ENCODE measurements at regions of chr19 and their contacts with region 1.

Region 1: GRCh38 chr19:32570081-32570785 is 10.8 kb upstream of the PDCD5 start:
- DNase-seq: peak; percentile 75
- H3K4me3 ChIP-seq: peak overlapping the region; percentile 23 to 60
- H3K27ac ChIP-seq: no peak overlapping the region
- H3K4me1 ChIP-seq: no peaks in the 10 kb centered on the region
- H3K27me3 ChIP-seq: no peaks in the 10 kb centered on the region; the same call in 1 of the 2 replicates
- CTCF ChIP-seq: peak; percentile 91
- EP300 ChIP-seq: no peak
- RAD21 ChIP-seq: peak; percentile 93

Region 2: GRCh38 chr19:30669329-30670010 is 1900.8 kb before region 1 on chr19:
- CTCF ChIA-PET with region 1: interaction called, 12 read pairs
- POLR2A ChIA-PET with region 1: no interaction called
- DNase-seq: peak; percentile 83
- H3K4me3 ChIP-seq: no peak overlapping the region; a peak in 2 of 4 replicates
- H3K27ac ChIP-seq: no peak overlapping the region
- H3K4me1 ChIP-seq: peaks cover 0 to 5% of the 10 kb centered on the region in 2 experiments; a peak in 1 of 4 replicates
- H3K27me3 ChIP-seq: no peaks in the 10 kb centered on the region
- CTCF ChIP-seq: peak; percentile 84
- EP300 ChIP-seq: no peak
- RAD21 ChIP-seq: peak; percentile 83

Region 3: GRCh38 chr19:32233885-32234284 is 336.3 kb before region 1 on chr19:
- CTCF ChIA-PET with region 1: no interaction called
- POLR2A ChIA-PET with region 1: no interaction called
- DNase-seq: no peak
- H3K4me3 ChIP-seq: no peak overlapping the region
- H3K27ac ChIP-seq: no peak overlapping the region
- H3K4me1 ChIP-seq: peaks cover 0 to 4% of the 10 kb centered on the region in 2 experiments; a peak in 1 of 4 replicates
- H3K27me3 ChIP-seq: no peaks in the 10 kb centered on the region
- CTCF ChIP-seq: no peak
- EP300 ChIP-seq: no peak
- RAD21 ChIP-seq: no peak

Region 4: DNA sequence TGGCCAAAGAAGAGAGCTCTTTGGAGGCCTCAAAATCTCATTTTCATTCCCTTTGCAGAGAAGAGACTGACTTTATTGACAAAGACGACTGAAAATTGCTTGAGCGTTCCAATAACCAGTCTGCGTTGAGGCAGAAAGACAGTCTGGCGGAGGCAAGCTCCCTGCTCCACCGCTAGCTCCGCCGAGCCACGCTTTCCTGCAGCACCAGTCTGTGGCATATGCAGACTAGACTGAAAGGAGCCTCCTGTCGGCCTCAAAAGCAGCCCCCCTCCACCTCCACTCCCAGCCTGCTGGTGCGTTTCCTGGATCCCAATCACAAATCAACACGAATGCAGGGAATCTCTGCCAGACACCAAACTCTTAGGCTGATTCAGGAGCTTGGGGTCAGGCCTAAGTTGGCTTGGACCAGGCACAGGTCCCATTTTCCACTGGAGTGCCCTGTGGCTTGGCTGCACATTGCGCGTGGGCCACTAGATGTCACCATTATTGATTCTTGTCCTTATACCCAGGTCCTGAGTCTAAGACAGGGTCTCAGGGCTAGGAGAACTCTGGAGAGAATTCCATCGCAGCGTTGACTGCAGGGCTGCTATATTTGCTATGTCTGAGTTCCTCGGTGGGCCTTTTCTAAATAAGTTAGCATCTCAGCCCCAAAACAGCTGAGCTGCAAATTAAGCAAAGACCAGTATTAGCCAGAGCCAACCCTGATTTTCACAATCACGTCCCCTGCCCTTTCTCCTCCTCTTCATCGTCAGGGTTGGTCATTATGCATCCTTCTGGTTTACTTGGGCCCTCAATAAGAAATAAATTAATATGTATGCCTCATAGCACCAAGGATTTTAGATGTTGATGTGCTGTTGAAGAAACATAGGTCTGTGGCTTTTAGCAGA is 230.0 kb before region 1 on chr19:
- CTCF ChIA-PET with region 1: interaction called, 24 read pairs
- POLR2A ChIA-PET with region 1: interaction called, 4 read pairs
- DNase-seq: peak; percentile 74
- H3K4me3 ChIP-seq: no peak overlapping the region
- H3K27ac ChIP-seq: no peak overlapping the region
- H3K4me1 ChIP-seq: no peaks in the 10 kb centered on the region
- H3K27me3 ChIP-seq: no peaks in the 10 kb centered on the region
- CTCF ChIP-seq: peak; percentile 72
- EP300 ChIP-seq: no peak
- RAD21 ChIP-seq: peak; percentile 60

Region 5: GRCh38 chr19:32464279-32464678 is 106.0 kb before region 1 on chr19:
- CTCF ChIA-PET with region 1: interaction called, 34 read pairs
- POLR2A ChIA-PET with region 1: no interaction called
- DNase-seq: peak; percentile 37
- H3K4me3 ChIP-seq: no peak overlapping the region
- H3K27ac ChIP-seq: no peak overlapping the region
- H3K4me1 ChIP-seq: no peaks in the 10 kb centered on the region; a peak in 1 of 4 replicates
- H3K27me3 ChIP-seq: no peaks in the 10 kb centered on the region
- CTCF ChIP-seq: peak; percentile 56
- EP300 ChIP-seq: no peak
- RAD21 ChIP-seq: peak; percentile 59

Region 6: DNA sequence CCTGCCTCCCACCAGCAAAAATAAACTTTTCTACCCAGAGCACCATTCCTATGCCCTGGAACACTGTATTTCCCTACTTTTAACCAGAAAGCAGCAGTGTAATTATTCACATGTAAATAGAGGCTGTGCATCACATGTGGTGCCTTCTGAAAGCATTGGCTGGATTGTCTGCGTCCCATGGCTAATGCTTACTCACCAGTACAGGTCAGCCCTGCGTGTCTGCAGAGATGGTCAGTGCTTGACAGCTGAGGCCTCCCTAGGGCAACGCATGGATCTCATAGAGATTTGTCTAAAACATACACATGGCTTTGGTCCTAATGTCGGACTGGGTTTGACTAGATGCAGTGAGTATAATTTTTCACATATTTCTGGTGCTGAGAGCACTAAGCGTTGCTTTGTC is 100.4 kb before region 1 on chr19:
- CTCF ChIA-PET with region 1: interaction called, 34 read pairs
- POLR2A ChIA-PET with region 1: no interaction called
- DNase-seq: no peak
- H3K4me3 ChIP-seq: no peak overlapping the region
- H3K27ac ChIP-seq: no peak overlapping the region
- H3K4me1 ChIP-seq: peaks cover 0 to 7% of the 10 kb centered on the region in 2 experiments; a peak in 2 of 4 replicates
- H3K27me3 ChIP-seq: no peaks in the 10 kb centered on the region
- CTCF ChIP-seq: no peak
- EP300 ChIP-seq: no peak
- RAD21 ChIP-seq: no peak

Region 7: DNA sequence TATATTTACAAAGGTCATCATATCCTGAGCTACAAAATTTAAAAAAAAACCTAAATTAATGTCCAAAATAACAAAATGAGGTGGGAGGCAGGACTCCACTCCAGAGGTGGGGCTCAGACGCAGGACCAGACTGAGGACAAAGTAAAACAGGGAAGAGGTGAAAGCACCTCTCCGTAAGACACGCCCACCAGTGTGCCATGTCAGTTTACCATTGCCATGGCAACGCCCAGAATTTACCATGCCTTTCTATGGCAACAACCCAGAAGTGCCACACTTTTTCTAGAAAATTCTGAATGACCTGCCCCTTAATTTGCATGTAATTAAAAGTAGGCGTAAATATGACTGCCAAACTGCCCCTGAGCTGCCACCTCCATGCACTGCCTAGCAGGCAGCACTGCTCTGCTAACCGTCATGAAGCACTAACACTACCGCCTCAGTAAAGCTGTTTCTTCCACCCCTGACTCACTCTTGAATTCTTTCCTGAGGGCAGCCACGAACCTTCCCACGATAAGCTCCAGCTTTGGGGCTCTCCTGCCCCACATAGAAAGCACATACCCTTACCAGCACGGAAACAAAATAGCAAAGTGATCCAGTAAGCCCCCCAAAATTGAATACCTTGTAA is 11.5 kb before region 1 on chr19:
- CTCF ChIA-PET with region 1: interaction called, 16 read pairs
- POLR2A ChIA-PET with region 1: no interaction called
- DNase-seq: no peak
- H3K4me3 ChIP-seq: no peak overlapping the region
- H3K27ac ChIP-seq: no peak overlapping the region
- H3K4me1 ChIP-seq: no peaks in the 10 kb centered on the region
- H3K27me3 ChIP-seq: no peaks in the 10 kb centered on the region
- CTCF ChIP-seq: no peak
- EP300 ChIP-seq: no peak
- RAD21 ChIP-seq: no peak

Region 8: DNA sequence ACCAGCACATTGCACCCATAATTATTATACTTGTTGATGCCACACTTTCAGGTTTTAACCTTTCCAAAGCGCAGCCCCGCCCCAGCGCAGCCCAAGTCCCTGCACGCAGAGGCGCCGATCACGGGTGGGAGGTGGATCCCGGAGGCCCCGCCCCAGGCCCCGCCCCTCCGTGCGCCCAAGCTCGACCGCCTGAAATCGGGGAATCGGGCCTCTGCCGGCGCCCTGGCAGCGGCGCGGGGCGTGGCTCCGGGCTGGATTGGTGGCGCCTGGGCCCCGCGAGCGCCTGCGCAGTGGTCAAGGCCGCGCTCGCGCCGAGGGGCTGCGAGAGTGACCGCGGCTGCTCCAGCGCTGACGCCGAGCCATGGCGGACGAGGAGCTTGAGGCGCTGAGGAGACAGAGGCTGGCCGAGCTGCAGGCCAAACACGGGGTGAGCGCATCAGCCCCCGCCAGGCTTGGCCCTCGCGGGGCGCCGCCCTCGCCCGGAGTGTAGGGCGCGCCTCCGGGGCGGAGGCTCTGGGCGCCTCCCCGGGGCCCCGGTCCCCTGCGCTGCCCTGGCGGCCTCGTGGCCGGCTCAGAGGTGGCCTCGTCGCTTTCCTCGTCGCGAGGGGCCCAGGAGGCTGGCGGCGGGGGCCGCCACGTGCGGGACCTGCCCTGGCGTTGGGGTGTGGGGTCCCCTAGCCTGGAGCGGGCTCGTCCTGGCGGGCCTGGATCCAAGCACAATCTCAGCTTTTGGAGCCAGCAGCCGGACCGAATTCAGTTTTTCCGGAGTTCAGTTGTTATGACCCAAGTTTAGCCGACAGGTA is 10.9 kb after region 1 on chr19 and contains the start of gene PDCD5:
- CTCF ChIA-PET with region 1: interaction called, 14 read pairs
- POLR2A ChIA-PET with region 1: no interaction called
- DNase-seq: peak; percentile 99
- H3K4me3 ChIP-seq: peak within 1 kb of the TSS; percentile 83 to 84
- H3K27ac ChIP-seq: peak within 1 kb of the TSS; percentile 41 to 83; a peak in 3 of 4 replicates
- H3K4me1 ChIP-seq: peaks cover 5 to 6% of the 10 kb centered on the region in 2 experiments; a peak in 3 of 4 replicates
- H3K27me3 ChIP-seq: no peaks in the 10 kb centered on the region
- CTCF ChIP-seq: no peak
- EP300 ChIP-seq: no peak
- RAD21 ChIP-seq: no peak
- polyA plus RNA-seq, gene PDCD5: 122 and 188 TPM in 2 replicates

Measured in SK-N-SH (cell line).